ENCODE measurements at regions of chr12 and their contacts with region 1.

Region 1: DNA sequence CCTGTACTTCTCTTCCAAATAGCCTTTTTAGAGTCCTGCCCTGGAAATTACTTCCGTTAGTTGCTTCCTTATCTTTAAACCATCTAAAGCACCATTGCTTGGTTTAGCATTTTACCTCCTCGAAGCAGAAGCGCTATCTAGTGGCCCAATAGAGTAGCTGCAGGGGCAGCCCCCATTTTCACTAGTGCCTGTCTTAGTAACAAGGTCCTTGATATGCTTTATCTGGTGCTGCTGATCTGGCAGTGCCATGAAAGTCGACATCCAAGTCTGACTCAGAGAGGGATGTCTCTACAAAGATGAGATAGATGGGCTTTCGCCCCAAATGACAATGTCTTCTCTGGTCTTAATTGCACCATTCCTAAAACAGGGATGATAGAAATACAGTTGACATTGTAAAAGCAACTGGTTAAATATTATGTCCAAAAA is 25.0 kb upstream of the CIT start:
- DNase-seq: peak; percentile 46 to 82 (median 62)
- ATAC-seq: peak; percentile 100
- H3K4me3 ChIP-seq: no peak overlapping the region
- H3K4me3 Mint-ChIP-seq: no peak overlapping the region
- H3K27ac ChIP-seq: no peak overlapping the region
- H3K27ac Mint-ChIP-seq: no peak overlapping the region
- H3K4me1 ChIP-seq: peaks cover 4% of the 10 kb centered on the region
- H3K4me1 Mint-ChIP-seq: peaks cover 7% of the 10 kb centered on the region
- H3K27me3 ChIP-seq: no peaks in the 10 kb centered on the region
- H3K27me3 Mint-ChIP-seq: no peaks in the 10 kb centered on the region
- CTCF ChIP-seq: peak; percentile 87

Region 2: GRCh38 chr12:119115296-119115905 is 786.7 kb before region 1 on chr12:
- CTCF ChIA-PET with region 1: no interaction called
- POLR2A ChIA-PET with region 1: no interaction called
- intact Hi-C with region 1: loop called in 1 of 2 experiments (anchors 5 kb)
- DNase-seq: peak in 4 of 14 experiments; percentile 11 to 37 (median 28)
- ATAC-seq: no peak
- H3K4me3 ChIP-seq: no peak overlapping the region
- H3K4me3 Mint-ChIP-seq: no peak overlapping the region
- H3K27ac ChIP-seq: no peak overlapping the region
- H3K27ac Mint-ChIP-seq: no peak overlapping the region
- H3K4me1 ChIP-seq: no peaks in the 10 kb centered on the region
- H3K4me1 Mint-ChIP-seq: no peaks in the 10 kb centered on the region
- H3K27me3 ChIP-seq: no peaks in the 10 kb centered on the region
- H3K27me3 Mint-ChIP-seq: peaks cover 12% of the 10 kb centered on the region
- CTCF ChIP-seq: peak; percentile 79

Region 3: DNA sequence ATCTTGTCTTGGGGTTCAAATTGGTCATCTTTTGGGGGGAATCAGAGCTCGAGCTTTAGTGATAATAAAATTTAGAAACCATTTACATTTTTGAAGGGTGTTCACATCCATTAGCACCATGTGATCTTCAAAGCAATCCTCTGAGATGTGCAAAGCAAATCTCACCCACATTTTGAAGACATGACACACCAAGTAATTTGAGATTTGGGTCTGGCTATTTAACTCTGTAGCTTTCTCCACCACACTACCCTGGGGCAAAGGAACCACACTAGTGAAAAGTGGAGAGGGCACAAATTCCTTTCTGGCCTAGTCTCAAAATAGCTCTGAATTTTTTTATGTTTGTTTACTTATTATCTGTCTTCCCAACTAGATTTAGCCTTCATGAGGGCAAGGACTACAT is 355.1 kb before region 1 on chr12:
- CTCF ChIA-PET with region 1: no interaction called
- POLR2A ChIA-PET with region 1: no interaction called
- intact Hi-C with region 1: no loop called
- DNase-seq: no peak
- ATAC-seq: no peak
- H3K4me3 ChIP-seq: no peak overlapping the region
- H3K4me3 Mint-ChIP-seq: no peak overlapping the region
- H3K27ac ChIP-seq: no peak overlapping the region
- H3K27ac Mint-ChIP-seq: no peak overlapping the region
- H3K4me1 ChIP-seq: no peaks in the 10 kb centered on the region
- H3K4me1 Mint-ChIP-seq: no peaks in the 10 kb centered on the region
- H3K27me3 ChIP-seq: peaks cover 6 to 8% of the 10 kb centered on the region in 2 experiments
- H3K27me3 Mint-ChIP-seq: peaks cover 75% of the 10 kb centered on the region
- CTCF ChIP-seq: no peak

Region 4: GRCh38 chr12:119695034-119695433 is 207.1 kb before region 1 on chr12:
- CTCF ChIA-PET with region 1: no interaction called
- POLR2A ChIA-PET with region 1: no interaction called
- intact Hi-C with region 1: loop called in 1 of 2 experiments (anchors 10 kb)
- DNase-seq: no peak
- ATAC-seq: no peak
- H3K4me3 ChIP-seq: no peak overlapping the region
- H3K4me3 Mint-ChIP-seq: no peak overlapping the region
- H3K27ac ChIP-seq: no peak overlapping the region
- H3K27ac Mint-ChIP-seq: no peak overlapping the region
- H3K4me1 ChIP-seq: no peaks in the 10 kb centered on the region
- H3K4me1 Mint-ChIP-seq: no peaks in the 10 kb centered on the region
- H3K27me3 ChIP-seq: no peaks in the 10 kb centered on the region
- H3K27me3 Mint-ChIP-seq: no peaks in the 10 kb centered on the region
- CTCF ChIP-seq: peak; percentile 24

Region 5: DNA sequence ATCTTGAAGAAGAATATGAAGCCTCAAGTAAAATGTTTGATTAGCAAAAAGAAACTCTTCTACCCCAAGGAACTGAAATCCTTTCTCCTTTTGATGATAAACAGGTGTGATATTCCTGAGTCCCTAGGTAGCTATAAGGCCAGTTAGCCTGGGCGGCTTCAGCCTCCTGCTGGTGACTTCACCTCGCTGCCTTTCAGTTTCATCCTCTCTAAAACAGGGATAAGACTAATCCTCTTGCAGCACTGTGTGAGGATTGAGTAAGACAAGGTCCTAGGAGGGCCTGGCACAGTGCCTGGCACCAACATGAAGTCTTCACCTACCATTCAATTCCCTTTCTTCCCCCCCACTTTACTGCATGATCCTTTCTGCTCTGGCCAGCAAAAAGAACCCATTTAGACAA is 67.0 kb before region 1 on chr12:
- CTCF ChIA-PET with region 1: no interaction called
- POLR2A ChIA-PET with region 1: no interaction called
- intact Hi-C with region 1: no loop called
- DNase-seq: no peak
- ATAC-seq: no peak
- H3K4me3 ChIP-seq: no peak overlapping the region
- H3K4me3 Mint-ChIP-seq: no peak overlapping the region
- H3K27ac ChIP-seq: no peak overlapping the region
- H3K27ac Mint-ChIP-seq: no peak overlapping the region
- H3K4me1 ChIP-seq: no peaks in the 10 kb centered on the region
- H3K4me1 Mint-ChIP-seq: no peaks in the 10 kb centered on the region
- H3K27me3 ChIP-seq: no peaks in the 10 kb centered on the region
- H3K27me3 Mint-ChIP-seq: no peaks in the 10 kb centered on the region
- CTCF ChIP-seq: no peak

Region 6: GRCh38 chr12:119931402-119931801 is 29.3 kb after region 1 on chr12:
- CTCF ChIA-PET with region 1: no interaction called
- POLR2A ChIA-PET with region 1: no interaction called
- intact Hi-C with region 1: no loop called
- DNase-seq: no peak
- ATAC-seq: no peak
- H3K4me3 ChIP-seq: no peak overlapping the region
- H3K4me3 Mint-ChIP-seq: no peak overlapping the region
- H3K27ac ChIP-seq: no peak overlapping the region
- H3K27ac Mint-ChIP-seq: no peak overlapping the region
- H3K4me1 ChIP-seq: no peaks in the 10 kb centered on the region
- H3K4me1 Mint-ChIP-seq: no peaks in the 10 kb centered on the region
- H3K27me3 ChIP-seq: no peaks in the 10 kb centered on the region
- H3K27me3 Mint-ChIP-seq: no peaks in the 10 kb centered on the region
- CTCF ChIP-seq: no peak